GM10248 (cell line): ENCODE measurements at regions of chr5 and their contacts with region 1.

Region 1: GRCh38 chr5:66306105-66306843 is 162.2 kb downstream of the SREK1 start:
- DNase-seq: peak; percentile 62
- CTCF ChIP-seq: peak; percentile 90

Region 2: GRCh38 chr5:66324357-66324756 is 18.1 kb after region 1 on chr5:
- CTCF ChIA-PET with region 1: interaction called, 64 read pairs
- POLR2A ChIA-PET with region 1: no interaction called
- DNase-seq: no peak
- CTCF ChIP-seq: no peak

Region 3: GRCh38 chr5:66343370-66344071 is 37.2 kb after region 1 on chr5:
- CTCF ChIA-PET with region 1: interaction called, 40 read pairs
- POLR2A ChIA-PET with region 1: no interaction called
- DNase-seq: no peak
- CTCF ChIP-seq: no peak

Region 4: GRCh38 chr5:66796305-66797292 is 490.3 kb after region 1 on chr5:
- CTCF ChIA-PET with region 1: interaction called, 10 read pairs
- POLR2A ChIA-PET with region 1: no interaction called
- DNase-seq: no peak
- CTCF ChIP-seq: no peak